Heart right ventricle (tissue), 16 donors: ENCODE measurements at regions of chr3 and their contacts with region 1.

Region 1: GRCh38 chr3:14203521-14204079 is 25.0 kb downstream of the LSM3 start:
- DNase-seq: peak in 1 of 2 donors; percentile 72
- ATAC-seq: peak; percentile 72 to 87 (median 83)
- H3K4me3 ChIP-seq: no peak overlapping the region
- H3K27ac ChIP-seq: peak overlapping the region in 7 of 10 donors; percentile 6 to 86 (median 81)
- H3K4me1 ChIP-seq: peaks cover 6 to 43% (median 21%) of the 10 kb centered on the region in 9 donors
- H3K27me3 ChIP-seq: no peaks in the 10 kb centered on the region
- CTCF ChIP-seq: peak; percentile 72 to 88 (median 86)

Region 2: GRCh38 chr3:14234251-14235002 is 30.8 kb after region 1 on chr3:
- intact Hi-C with region 1: loop called in 1 of 10 experiments (anchors 2 kb)
- DNase-seq: peak in 1 of 2 donors; percentile 61
- ATAC-seq: peak in 7 of 8 donors; percentile 40 to 73 (median 59)
- H3K4me3 ChIP-seq: no peak overlapping the region
- H3K27ac ChIP-seq: peak overlapping the region in 8 of 10 donors; percentile 26 to 92 (median 84)
- H3K4me1 ChIP-seq: peaks cover 0 to 58% (median 29%) of the 10 kb centered on the region in 9 donors
- H3K27me3 ChIP-seq: peaks cover 0 to 7% (median 0%) of the 10 kb centered on the region in 7 donors
- CTCF ChIP-seq: no peak

Region 3: GRCh38 chr3:14253707-14254382 is 50.2 kb after region 1 on chr3:
- intact Hi-C with region 1: loop called in 2 of 10 experiments (anchors 2 to 10 kb)
- DNase-seq: no peak
- ATAC-seq: no peak
- H3K4me3 ChIP-seq: no peak overlapping the region
- H3K27ac ChIP-seq: no peak overlapping the region
- H3K4me1 ChIP-seq: peaks cover 0 to 11% (median 0%) of the 10 kb centered on the region in 9 donors
- H3K27me3 ChIP-seq: peaks cover 0 to 15% (median 3%) of the 10 kb centered on the region in 7 donors
- CTCF ChIP-seq: no peak

Region 4: DNA sequence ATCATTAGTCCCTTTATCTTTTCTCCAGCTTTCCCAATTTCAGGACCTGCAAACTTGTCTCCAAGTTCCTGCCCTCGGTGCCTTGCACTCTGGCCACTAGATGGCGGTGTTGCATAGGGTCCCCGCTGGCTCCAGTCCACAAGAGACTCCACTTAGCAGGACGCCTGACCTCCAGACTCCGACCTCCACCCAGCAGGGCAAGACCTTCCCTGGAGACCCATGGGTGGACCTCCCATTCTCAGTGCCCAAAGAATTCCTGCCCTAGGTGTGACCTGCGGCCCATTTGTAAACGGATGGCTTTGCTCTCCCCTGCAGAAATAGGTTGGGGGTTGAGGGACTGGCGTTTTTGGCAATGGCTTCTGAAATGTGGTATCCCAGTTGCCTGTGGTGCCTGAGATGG is 57.6 kb after region 1 on chr3:
- intact Hi-C with region 1: loop called in 7 of 10 experiments (anchors 2 to 10 kb)
- DNase-seq: peak; percentile 81 to 84
- ATAC-seq: peak; percentile 71 to 94 (median 87)
- H3K4me3 ChIP-seq: no peak overlapping the region
- H3K27ac ChIP-seq: no peak overlapping the region
- H3K4me1 ChIP-seq: peaks cover 0 to 14% (median 4%) of the 10 kb centered on the region in 9 donors
- H3K27me3 ChIP-seq: peaks cover 0 to 50% (median 14%) of the 10 kb centered on the region in 7 donors
- CTCF ChIP-seq: peak; percentile 95 to 99 (median 97)

Region 5: GRCh38 chr3:14461748-14462324 is 258.2 kb after region 1 on chr3:
- intact Hi-C with region 1: loop called in 4 of 10 experiments (anchors 2 to 5 kb)
- DNase-seq: peak; percentile 51 to 59
- ATAC-seq: peak in 6 of 8 donors; percentile 35 to 74 (median 60)
- H3K4me3 ChIP-seq: no peak overlapping the region
- H3K27ac ChIP-seq: no peak overlapping the region
- H3K4me1 ChIP-seq: peaks cover 2 to 42% (median 25%) of the 10 kb centered on the region in 9 donors
- H3K27me3 ChIP-seq: peaks cover 0 to 37% (median 4%) of the 10 kb centered on the region in 7 donors
- CTCF ChIP-seq: peak in 8 of 9 donors; percentile 22 to 72 (median 55)

Region 6: DNA sequence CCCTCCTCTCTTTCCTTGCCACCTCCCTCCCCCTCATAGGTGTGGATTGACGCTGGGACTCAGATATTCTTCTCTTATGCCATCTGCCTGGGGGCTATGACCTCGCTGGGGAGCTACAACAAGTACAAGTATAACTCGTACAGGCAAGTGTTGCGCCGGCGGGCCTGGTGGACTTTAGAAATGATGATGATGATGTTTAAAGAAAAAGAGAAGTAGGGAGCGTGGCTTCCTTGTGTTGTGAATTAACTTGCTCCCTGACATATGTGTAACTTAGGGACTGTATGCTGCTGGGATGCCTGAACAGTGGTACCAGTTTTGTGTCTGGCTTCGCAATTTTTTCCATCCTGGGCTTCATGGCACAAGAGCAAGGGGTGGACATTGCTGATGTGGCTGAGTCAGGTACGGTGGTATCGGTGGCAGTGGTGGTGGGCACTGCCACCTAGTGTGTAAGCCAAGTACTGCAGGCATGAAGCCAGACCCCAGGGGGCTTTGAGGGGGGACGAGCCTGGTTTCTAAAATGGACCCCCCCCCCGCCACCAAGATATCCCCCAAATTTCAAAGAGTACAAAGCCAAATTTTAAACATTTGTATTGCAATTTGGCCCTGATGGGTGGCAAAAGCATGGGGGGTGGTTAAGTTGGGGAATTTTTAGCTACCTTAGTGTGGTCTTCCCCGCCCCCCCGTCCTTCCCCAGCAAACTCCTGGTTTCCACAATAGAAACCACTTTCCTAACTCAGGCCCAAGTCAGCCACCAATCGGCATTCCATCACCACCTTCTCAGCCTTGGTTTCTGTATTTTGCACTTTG is 264.4 kb after region 1 on chr3:
- intact Hi-C with region 1: loop called in 9 of 10 experiments (anchors 1 to 5 kb)
- DNase-seq: peak in 1 of 2 donors; percentile 40
- ATAC-seq: peak in 7 of 8 donors; percentile 44 to 78 (median 57)
- H3K4me3 ChIP-seq: no peak overlapping the region
- H3K27ac ChIP-seq: no peak overlapping the region
- H3K4me1 ChIP-seq: peaks cover 0 to 26% (median 2%) of the 10 kb centered on the region in 9 donors
- H3K27me3 ChIP-seq: peaks cover 0 to 28% (median 0%) of the 10 kb centered on the region in 7 donors
- CTCF ChIP-seq: peak; percentile 84 to 93 (median 88)

Region 7: GRCh38 chr3:14555835-14556234 is 352.2 kb after region 1 on chr3:
- intact Hi-C with region 1: loop called in 1 of 10 experiments (anchors 10 kb)
- DNase-seq: peak; percentile 39 to 55
- ATAC-seq: peak; percentile 72 to 92 (median 82)
- H3K4me3 ChIP-seq: peak overlapping the region in 9 of 10 donors; percentile 15 to 52 (median 35)
- H3K27ac ChIP-seq: peak overlapping the region in 3 of 10 donors; percentile 47 to 54 (median 51)
- H3K4me1 ChIP-seq: peaks cover 0 to 35% (median 17%) of the 10 kb centered on the region in 9 donors
- H3K27me3 ChIP-seq: peaks cover 0 to 29% (median 14%) of the 10 kb centered on the region in 7 donors
- CTCF ChIP-seq: no peak